ENCODE measurements at regions of chr12 and their contacts with region 1.

Region 1: GRCh38 chr12:47802324-47802735 is 17.4 kb downstream of the HDAC7 start:
- DNase-seq: peak; percentile 63

Region 2: GRCh38 chr12:47837190-47838171 is 35.2 kb after region 1 on chr12:
- intact Hi-C with region 1: loop called in 1 of 2 experiments (anchors 5 kb)
- DNase-seq: peak; percentile 88